ENCODE measurements at regions of chr1 and their contacts with region 1.

Region 1: DNA sequence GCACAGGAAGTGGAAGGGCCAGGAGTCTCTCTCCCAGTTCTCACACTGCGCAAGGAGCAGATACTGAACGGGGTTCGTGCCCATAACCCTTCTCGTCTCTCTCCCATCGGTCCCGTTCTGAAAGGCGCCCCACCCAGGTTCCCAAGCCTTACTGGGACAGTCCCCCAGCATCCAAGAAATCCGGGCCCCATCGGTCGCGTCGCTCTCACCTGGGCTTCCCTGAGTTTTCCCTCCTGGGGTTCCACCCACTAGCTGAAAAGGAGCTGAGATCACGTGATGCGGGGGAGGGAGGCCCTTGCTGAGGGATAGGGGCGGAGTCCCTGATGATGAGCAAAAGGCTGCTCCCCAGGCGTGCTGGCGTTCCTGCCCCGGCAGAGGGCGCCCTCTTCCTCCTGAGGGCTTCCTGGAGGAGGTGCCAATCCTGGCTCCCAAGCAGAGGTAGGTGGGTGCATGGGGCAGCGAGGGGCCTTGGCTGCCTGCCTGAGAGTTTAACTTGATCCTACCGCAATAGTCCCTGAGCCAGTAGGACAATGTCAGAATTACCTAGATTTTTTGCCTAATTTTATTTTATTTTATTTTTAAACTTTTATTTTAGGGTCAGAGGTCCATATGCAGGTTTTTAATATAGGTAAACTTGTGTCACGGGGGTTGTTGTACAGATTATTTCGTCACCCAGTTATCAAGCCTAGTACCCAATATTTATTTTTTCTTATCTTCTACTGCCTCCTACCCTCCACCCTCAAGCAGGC is at the start of gene SPOCD1:
- DNase-seq: peak; percentile 23
- H3K4me3 ChIP-seq: peak within 1 kb of the TSS; percentile 53
- CTCF ChIP-seq: peak; percentile 96

Region 2: DNA sequence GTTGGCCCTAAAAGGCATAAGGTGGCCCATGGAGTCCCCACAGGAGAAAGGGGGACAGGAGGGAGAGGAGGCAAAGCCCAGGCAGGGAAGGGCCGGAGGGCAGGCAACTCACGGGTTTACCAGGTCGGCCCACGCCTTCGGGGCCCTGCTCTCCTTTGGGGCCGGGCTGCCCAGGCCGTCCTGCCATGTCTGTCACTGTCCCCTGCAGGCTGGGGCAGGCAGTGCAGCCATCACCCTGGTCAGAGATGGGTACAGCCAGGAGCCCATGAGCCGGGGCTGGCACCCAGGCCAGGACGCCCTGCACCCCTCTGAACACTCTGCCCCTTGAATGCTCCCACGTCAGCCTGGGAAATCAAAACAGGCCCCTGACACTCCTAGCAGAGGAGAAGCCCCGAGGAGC is 131.9 kb before region 1 on chr1:
- CTCF ChIA-PET with region 1: no interaction called
- POLR2A ChIA-PET with region 1: no interaction called
- DNase-seq: no peak
- H3K4me3 ChIP-seq: no peak overlapping the region
- CTCF ChIP-seq: peak; percentile 37

Region 3: GRCh38 chr1:31739346-31739745 is 76.6 kb before region 1 on chr1:
- CTCF ChIA-PET with region 1: no interaction called
- POLR2A ChIA-PET with region 1: no interaction called
- DNase-seq: no peak
- H3K4me3 ChIP-seq: no peak overlapping the region
- CTCF ChIP-seq: no peak

Region 4: GRCh38 chr1:31798433-31799195 is 17.3 kb before region 1 on chr1:
- CTCF ChIA-PET with region 1: interaction called, 47 read pairs
- POLR2A ChIA-PET with region 1: no interaction called
- DNase-seq: peak; percentile 81
- H3K4me3 ChIP-seq: peak overlapping the region; percentile 93
- CTCF ChIP-seq: no peak

Region 5: DNA sequence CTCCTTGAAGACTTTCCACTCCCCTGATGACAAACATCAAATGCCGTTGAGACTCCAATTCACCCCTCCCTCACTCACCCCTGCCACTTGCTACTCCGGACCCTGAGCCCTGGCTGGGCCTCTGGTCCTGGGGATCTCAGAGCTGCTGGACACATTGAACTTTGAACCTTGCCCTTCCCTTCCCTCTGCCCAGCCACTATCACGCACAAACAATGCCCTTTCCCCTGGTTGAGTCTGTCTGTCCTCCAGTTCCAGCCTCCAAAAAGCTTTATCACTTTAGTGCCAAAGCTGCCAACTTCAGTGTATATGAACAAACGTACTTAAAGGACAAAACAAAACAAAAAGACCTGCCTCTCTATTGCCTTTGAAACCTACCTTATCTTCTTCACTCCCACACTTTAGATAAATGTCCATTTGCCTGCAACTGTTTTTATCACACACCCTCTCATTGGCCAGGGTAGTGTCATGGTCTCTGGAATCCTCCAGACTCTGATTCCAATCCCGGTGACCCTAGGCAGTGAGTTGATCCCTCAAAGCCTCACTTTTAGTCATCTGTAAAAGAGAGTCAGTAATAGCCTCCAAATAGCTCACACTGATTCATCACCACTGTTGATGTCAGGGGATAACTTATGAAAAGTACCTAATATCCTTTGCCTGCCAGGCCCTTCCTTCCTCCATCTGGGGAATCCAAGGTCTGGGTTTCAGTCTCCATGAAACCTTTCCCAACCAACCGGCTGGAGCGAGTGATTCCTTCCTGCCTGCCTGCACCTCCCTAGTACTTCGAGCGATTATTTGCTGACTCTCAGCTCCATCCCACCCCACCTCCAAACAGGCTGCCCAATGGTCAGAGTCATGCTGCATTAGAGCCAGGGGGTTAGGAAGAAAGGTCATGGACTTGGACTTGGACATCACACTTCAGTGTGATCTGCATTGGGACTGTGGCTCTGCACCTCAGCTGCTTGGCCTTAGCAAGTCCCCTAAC is 15.8 kb after region 1 on chr1:
- CTCF ChIA-PET with region 1: interaction called, 23 read pairs
- POLR2A ChIA-PET with region 1: no interaction called
- DNase-seq: no peak
- H3K4me3 ChIP-seq: no peak overlapping the region
- CTCF ChIP-seq: no peak

Region 6: DNA sequence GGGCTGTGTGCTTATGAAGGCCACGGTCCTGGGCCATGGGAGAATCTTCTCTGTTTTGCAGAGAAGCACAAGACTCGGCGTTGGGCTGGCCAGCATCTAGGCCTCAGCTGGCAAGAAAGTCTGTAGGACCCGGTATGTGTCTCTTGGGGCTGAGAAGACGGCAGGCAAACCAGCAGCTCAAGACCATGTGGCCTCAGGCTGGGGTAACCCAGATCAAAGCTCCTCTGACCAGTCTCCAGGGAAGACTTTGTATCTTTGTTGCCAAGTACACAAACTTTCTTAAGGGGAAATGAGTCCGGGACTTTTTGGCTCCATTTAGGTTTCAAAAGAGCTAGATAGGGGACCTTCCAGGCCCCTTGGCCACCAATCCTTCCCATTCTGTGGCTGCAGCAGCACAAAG is 62.1 kb after region 1 on chr1:
- CTCF ChIA-PET with region 1: no interaction called
- POLR2A ChIA-PET with region 1: no interaction called
- DNase-seq: no peak
- H3K4me3 ChIP-seq: no peak overlapping the region
- CTCF ChIP-seq: no peak

Region 7: DNA sequence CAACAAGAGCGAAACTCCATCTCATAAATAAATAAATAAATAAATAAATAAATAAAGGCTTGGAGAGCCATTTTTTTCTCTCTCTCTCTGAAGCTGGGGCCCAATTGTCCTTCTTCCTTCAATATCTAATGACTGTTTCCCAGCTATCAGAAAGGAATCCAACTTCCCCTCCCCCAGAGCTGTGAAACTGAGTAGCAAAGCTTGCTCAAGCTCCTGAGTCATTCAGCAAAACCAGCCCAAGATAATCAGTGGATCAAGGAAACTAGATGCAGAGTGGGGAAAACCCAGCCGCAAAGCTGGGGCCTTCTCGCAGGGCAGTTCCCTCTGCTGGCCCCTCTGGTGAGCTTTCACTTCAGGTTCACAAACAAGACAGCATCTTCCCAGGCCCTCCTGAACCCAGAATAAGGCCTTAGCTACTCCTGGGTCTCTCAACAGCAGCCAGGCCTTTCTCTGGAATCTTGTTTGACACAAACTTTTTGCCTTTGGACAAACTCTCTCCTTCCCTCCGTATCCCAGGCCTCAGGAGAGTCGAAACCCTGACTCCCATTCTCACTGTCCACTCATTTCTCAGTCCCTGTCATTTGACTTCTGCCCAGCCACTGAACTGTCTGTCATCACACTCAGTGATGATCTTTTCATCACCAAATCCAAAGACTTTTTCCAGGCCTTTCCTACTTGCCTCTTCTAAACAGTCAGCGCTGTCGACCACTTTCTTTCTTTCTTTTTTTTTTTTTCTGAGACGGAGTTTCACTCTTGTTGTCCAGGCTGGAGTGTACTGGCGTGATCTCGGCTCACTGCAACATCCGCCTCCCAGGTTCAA is 140.2 kb after region 1 on chr1:
- CTCF ChIA-PET with region 1: interaction called, 89 read pairs
- POLR2A ChIA-PET with region 1: no interaction called
- DNase-seq: peak; percentile 99
- H3K4me3 ChIP-seq: no peak overlapping the region
- CTCF ChIP-seq: peak; percentile 72

Region 8: GRCh38 chr1:31961536-31961935 is 145.6 kb after region 1 on chr1:
- CTCF ChIA-PET with region 1: interaction called, 89 read pairs
- POLR2A ChIA-PET with region 1: interaction called, 5 read pairs
- DNase-seq: no peak
- H3K4me3 ChIP-seq: no peak overlapping the region
- CTCF ChIP-seq: no peak

Region 9: GRCh38 chr1:32005522-32005921 is 189.6 kb after region 1 on chr1:
- CTCF ChIA-PET with region 1: interaction called, 11 read pairs
- POLR2A ChIA-PET with region 1: no interaction called
- DNase-seq: no peak
- H3K4me3 ChIP-seq: no peak overlapping the region
- CTCF ChIP-seq: no peak

Region 10: GRCh38 chr1:32063261-32063681 is 247.3 kb after region 1 on chr1:
- CTCF ChIA-PET with region 1: interaction called, 13 read pairs
- POLR2A ChIA-PET with region 1: no interaction called
- DNase-seq: no peak
- H3K4me3 ChIP-seq: no peak overlapping the region
- CTCF ChIP-seq: peak; percentile 50